Panc1 (cell line): ENCODE measurements at regions of chr4 and their contacts with region 1.

Region 1: DNA sequence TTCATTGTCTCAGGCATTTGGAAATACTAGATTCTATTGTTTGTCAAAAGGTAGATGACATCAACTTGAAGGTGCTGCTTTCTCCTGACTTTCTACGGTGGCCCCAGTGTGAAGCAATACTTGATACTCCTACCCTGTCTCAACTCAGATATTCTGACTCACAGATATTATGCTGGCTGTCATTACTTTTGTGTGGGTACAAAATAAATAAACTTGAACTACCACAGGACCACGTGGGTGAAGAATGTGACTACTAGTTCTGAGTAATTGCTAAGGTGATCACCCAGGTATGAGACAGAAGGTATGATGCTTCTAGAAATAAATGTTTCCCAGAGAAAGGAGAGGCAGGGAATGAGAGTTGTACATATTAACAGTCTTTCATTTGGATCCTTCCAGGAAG is 275.3 kb upstream of the SPOCK3 start:
- DNase-seq: no peak
- ATAC-seq: no peak
- H3K4me3 ChIP-seq: no peak overlapping the region
- H3K27ac ChIP-seq: no peak overlapping the region
- H3K4me1 ChIP-seq: no peaks in the 10 kb centered on the region
- H3K27me3 ChIP-seq: no peaks in the 10 kb centered on the region
- CTCF ChIP-seq: no peak

Region 2: DNA sequence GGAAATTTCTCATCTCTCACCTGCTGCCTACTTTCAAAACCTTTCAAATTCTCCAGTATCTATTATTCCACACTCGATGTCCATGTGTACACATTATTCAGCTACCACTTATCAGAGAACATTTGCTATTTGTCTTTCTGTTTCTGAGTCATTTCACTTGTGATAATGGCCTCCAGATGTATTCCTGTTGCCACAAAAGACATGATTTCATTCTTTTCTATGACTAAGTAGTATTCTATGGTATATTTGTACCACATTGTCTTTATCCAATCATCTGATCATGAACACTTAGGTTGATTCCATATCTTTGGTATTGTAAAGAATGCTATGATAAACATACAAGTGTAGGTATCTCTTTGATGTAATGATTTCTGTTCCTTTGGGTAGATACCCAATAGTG is 34.8 kb after region 1 on chr4:
- CTCF ChIA-PET with region 1: no interaction called
- POLR2A ChIA-PET with region 1: no interaction called
- in situ Hi-C with region 1: no loop called
- intact Hi-C with region 1: loop called (anchors 2 kb)
- DNase-seq: no peak
- ATAC-seq: no peak
- H3K4me3 ChIP-seq: no peak overlapping the region
- H3K27ac ChIP-seq: no peak overlapping the region
- H3K4me1 ChIP-seq: no peaks in the 10 kb centered on the region
- H3K27me3 ChIP-seq: no peaks in the 10 kb centered on the region
- CTCF ChIP-seq: no peak

Region 3: GRCh38 chr4:168118116-168118515 is 608.6 kb after region 1 on chr4:
- CTCF ChIA-PET with region 1: no interaction called
- POLR2A ChIA-PET with region 1: no interaction called
- in situ Hi-C with region 1: no loop called
- intact Hi-C with region 1: no loop called
- DNase-seq: no peak
- ATAC-seq: no peak
- H3K4me3 ChIP-seq: no peak overlapping the region
- H3K27ac ChIP-seq: no peak overlapping the region
- H3K4me1 ChIP-seq: no peaks in the 10 kb centered on the region
- H3K27me3 ChIP-seq: no peaks in the 10 kb centered on the region
- CTCF ChIP-seq: no peak